Activated CD4-positive, alpha-beta memory T cell treated with anti-CD3 and anti-CD28 coated beads for 36 hours (primary cell): ENCODE measurements at regions of chr5 and their contacts with region 1.

Region 1: GRCh38 chr5:67065237-67065636 is 131.4 kb downstream of the CD180 start:
- DNase-seq: peak; percentile 71
- H3K4me3 Mint-ChIP-seq: no peak overlapping the region
- H3K27ac Mint-ChIP-seq: peak overlapping the region; percentile 74
- H3K4me1 Mint-ChIP-seq: peaks cover 26% of the 10 kb centered on the region
- H3K27me3 Mint-ChIP-seq: no peaks in the 10 kb centered on the region

Region 2: GRCh38 chr5:67012171-67012570 is 53.1 kb before region 1 on chr5:
- CTCF ChIA-PET with region 1: interaction called, 3 read pairs
- POLR2A ChIA-PET with region 1: interaction called, 3 read pairs
- intact Hi-C with region 1: loop called (anchors 2 kb)
- DNase-seq: peak; percentile 58
- H3K4me3 Mint-ChIP-seq: no peak overlapping the region
- H3K27ac Mint-ChIP-seq: peak overlapping the region; percentile 72
- H3K4me1 Mint-ChIP-seq: peaks cover 94% of the 10 kb centered on the region
- H3K27me3 Mint-ChIP-seq: no peaks in the 10 kb centered on the region

Region 3: GRCh38 chr5:67077296-67077695 is 12.1 kb after region 1 on chr5:
- CTCF ChIA-PET with region 1: no interaction called
- POLR2A ChIA-PET with region 1: no interaction called
- intact Hi-C with region 1: no loop called
- DNase-seq: no peak
- H3K4me3 Mint-ChIP-seq: no peak overlapping the region
- H3K27ac Mint-ChIP-seq: no peak overlapping the region
- H3K4me1 Mint-ChIP-seq: no peaks in the 10 kb centered on the region
- H3K27me3 Mint-ChIP-seq: no peaks in the 10 kb centered on the region

Region 4: DNA sequence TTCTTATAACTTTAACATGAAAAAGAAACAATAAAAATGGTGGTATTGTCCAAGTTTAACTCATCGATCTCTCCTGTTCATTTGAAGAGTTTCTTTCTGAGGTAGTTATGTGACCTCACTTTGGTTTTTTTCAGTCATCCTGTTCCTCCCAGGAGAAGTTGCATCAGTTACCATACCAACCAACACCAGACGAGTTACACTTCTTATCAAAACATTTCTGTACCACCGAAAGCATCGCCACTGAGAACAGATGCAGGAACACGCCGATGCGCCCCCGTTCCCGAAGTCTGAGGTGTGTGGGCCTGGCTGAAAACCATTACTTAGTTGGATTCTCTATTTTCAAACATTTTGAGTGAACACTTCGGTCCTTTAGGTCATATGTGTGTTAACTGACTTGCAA is 35.1 kb after region 1 on chr5:
- CTCF ChIA-PET with region 1: no interaction called
- POLR2A ChIA-PET with region 1: no interaction called
- intact Hi-C with region 1: loop called (anchors 2 kb)
- DNase-seq: peak; percentile 72
- H3K4me3 Mint-ChIP-seq: peak overlapping the region; percentile 0
- H3K27ac Mint-ChIP-seq: peak overlapping the region; percentile 71
- H3K4me1 Mint-ChIP-seq: peaks cover 18% of the 10 kb centered on the region
- H3K27me3 Mint-ChIP-seq: no peaks in the 10 kb centered on the region